Heart right ventricle (tissue), 16 donors: ENCODE measurements at regions of chr12 and their contacts with region 1.

Region 1: GRCh38 chr12:109428037-109428629 is 49.0 kb downstream of the KCTD10 start:
- DNase-seq: peak; percentile 79 to 87
- ATAC-seq: peak; percentile 75 to 93 (median 88)
- H3K4me3 ChIP-seq: no peak overlapping the region
- H3K27ac ChIP-seq: no peak overlapping the region
- H3K4me1 ChIP-seq: peaks cover 0 to 9% (median 7%) of the 10 kb centered on the region in 9 donors
- H3K27me3 ChIP-seq: peaks cover 0 to 2% (median 0%) of the 10 kb centered on the region in 7 donors
- CTCF ChIP-seq: peak; percentile 98 to 100 (median 98)

Region 2: GRCh38 chr12:109239179-109239578 is 189.0 kb before region 1 on chr12:
- intact Hi-C with region 1: no loop called
- DNase-seq: no peak
- ATAC-seq: no peak
- H3K4me3 ChIP-seq: no peak overlapping the region
- H3K27ac ChIP-seq: no peak overlapping the region
- H3K4me1 ChIP-seq: no peaks in the 10 kb centered on the region
- H3K27me3 ChIP-seq: no peaks in the 10 kb centered on the region
- CTCF ChIP-seq: no peak

Region 3: DNA sequence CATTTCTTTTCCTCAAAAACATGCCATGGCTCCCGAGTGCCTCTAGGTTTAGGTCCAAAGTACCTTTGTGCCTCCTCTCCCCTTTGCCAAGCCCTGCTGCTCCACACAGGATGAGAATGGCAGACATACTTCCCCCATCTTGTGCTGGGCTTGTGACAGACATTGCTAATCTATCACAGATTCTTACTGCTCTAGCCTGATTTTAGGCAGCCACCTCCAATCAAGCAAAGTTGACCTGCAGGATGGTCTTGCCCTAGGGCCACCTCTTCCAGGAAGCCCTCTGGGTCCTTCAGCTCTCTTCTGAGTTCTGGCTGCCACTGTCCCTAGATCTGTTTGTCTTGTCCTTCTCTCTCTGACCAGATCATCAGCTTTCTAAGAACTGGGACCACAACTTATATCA is 139.6 kb before region 1 on chr12:
- intact Hi-C with region 1: no loop called
- DNase-seq: no peak
- ATAC-seq: no peak
- H3K4me3 ChIP-seq: no peak overlapping the region
- H3K27ac ChIP-seq: no peak overlapping the region
- H3K4me1 ChIP-seq: peaks cover 0 to 14% (median 3%) of the 10 kb centered on the region in 9 donors
- H3K27me3 ChIP-seq: peaks cover 0 to 17% (median 8%) of the 10 kb centered on the region in 7 donors
- CTCF ChIP-seq: no peak

Region 4: DNA sequence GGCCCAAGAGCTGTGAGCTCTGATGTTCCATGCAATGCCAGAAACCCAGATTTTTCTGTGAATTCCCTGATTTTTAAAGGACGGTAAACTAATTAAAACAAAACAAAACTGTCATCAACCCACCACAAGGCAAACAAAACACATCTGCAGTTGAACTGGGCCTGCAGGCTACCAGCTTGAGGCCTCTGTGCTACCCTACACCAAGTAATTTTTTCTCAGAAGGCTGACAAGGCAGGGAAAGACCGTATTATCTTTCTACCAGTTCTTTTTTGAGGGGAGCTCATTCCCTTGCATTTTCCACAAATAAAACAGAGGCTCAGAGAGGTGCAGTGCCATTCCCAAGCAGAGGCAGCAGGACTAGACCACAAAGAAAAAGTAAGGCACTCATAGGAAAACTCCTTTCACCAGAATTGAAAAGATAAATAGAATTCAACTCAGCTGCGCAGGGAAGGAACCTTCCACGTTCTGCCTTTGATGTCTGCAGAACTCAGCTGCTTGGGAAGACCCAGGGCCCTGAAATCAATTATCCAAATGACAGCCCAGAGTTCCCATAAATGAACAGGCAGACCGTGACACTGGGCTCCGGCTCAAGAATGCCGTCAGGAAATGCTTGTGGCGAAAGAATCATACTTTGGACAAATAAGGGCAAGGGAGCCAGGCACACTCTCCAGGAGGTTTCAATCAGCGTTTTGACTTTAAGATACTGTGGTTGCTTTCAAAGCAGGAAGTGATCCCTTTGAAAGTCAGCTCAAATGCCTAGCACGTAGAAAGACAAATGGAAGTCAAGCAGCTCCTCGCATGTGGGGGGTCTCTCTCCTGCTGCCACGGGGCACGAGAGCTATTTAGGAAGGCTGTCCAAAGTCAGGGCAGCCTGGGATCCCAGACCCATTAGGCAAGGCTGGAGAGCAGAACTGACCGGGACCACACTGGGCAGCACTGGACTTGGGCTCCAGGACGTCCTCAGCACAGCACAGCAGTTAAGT is 34.9 kb after region 1 on chr12:
- intact Hi-C with region 1: loop called in 1 of 10 experiments (anchors 5 kb)
- DNase-seq: peak; percentile 71 to 88
- ATAC-seq: peak; percentile 70 to 86 (median 82)
- H3K4me3 ChIP-seq: peak overlapping the region in 7 of 10 donors; percentile 10 to 31 (median 18)
- H3K27ac ChIP-seq: peak overlapping the region; percentile 87 to 99 (median 98)
- H3K4me1 ChIP-seq: peaks cover 43 to 100% (median 100%) of the 10 kb centered on the region in 9 donors
- H3K27me3 ChIP-seq: no peaks in the 10 kb centered on the region
- CTCF ChIP-seq: no peak

Region 5: DNA sequence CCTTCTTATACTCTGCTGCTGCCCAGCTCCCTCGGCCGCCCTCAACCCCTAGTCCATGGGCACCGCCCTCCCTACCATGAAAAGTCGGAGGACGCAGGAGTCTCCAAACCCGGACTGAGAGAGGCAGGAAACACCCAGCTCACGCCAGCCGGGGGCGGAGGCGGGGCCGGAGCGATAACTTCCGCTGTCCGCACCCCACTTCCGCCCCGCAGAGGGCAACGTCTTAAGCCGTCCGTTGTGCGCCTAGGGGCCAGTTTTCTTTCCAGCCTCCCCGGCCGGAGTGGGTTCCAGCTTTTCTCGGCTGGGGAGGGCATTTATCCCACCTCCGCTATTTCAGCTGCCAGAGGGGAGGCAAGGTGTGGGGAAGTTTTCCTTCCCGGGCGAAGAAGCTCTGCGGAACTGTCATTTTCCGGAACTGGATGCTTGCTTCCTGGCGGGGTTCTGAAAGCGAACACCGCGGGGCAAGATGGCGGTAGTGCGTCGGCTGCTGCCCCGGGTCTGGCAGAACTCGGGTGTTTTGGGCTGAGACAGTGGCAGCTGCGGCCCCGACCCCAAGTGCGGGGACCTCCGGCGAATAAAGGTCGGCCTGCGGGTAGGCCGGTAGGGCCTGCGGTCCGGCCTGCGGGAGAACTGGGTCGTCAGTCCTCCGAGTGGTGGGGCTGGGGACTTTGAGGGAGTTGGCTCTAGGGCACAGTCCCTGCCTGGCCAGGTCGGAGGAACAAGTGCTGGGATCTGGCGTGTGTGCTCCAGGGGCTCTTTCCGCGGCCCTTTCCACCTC is 49.2 kb after region 1 on chr12 and contains the starts of genes KCTD10 and UBE3B:
- intact Hi-C with region 1: loop called in 9 of 10 experiments (anchors 2 to 5 kb)
- DNase-seq: peak; percentile 89 to 91
- ATAC-seq: peak; percentile 97 to 100 (median 99)
- H3K4me3 ChIP-seq: peak within 1 kb of the TSS; percentile 73 to 99 (median 88)
- H3K27ac ChIP-seq: peak within 1 kb of the TSS; percentile 92 to 100 (median 98)
- H3K4me1 ChIP-seq: peaks cover 8 to 63% (median 56%) of the 10 kb centered on the region in 9 donors
- H3K27me3 ChIP-seq: no peaks in the 10 kb centered on the region
- CTCF ChIP-seq: peak in 4 of 9 donors; percentile 14 to 37 (median 18)
- total RNA-seq, gene KCTD10: 21.5 to 64.9 (median 33.8) TPM
- total RNA-seq, gene UBE3B: 50.9 to 58.8 (median 55.8) TPM

Region 6: GRCh38 chr12:109597795-109598427 is 169.8 kb after region 1 on chr12:
- intact Hi-C with region 1: loop called in 5 of 10 experiments (anchors 10 kb)
- DNase-seq: peak; percentile 86 to 90
- ATAC-seq: peak; percentile 75 to 93 (median 91)
- H3K4me3 ChIP-seq: no peak overlapping the region
- H3K27ac ChIP-seq: no peak overlapping the region
- H3K4me1 ChIP-seq: peaks cover 0 to 26% (median 12%) of the 10 kb centered on the region in 9 donors
- H3K27me3 ChIP-seq: no peaks in the 10 kb centered on the region
- CTCF ChIP-seq: peak; percentile 90 to 99 (median 97)

Region 7: DNA sequence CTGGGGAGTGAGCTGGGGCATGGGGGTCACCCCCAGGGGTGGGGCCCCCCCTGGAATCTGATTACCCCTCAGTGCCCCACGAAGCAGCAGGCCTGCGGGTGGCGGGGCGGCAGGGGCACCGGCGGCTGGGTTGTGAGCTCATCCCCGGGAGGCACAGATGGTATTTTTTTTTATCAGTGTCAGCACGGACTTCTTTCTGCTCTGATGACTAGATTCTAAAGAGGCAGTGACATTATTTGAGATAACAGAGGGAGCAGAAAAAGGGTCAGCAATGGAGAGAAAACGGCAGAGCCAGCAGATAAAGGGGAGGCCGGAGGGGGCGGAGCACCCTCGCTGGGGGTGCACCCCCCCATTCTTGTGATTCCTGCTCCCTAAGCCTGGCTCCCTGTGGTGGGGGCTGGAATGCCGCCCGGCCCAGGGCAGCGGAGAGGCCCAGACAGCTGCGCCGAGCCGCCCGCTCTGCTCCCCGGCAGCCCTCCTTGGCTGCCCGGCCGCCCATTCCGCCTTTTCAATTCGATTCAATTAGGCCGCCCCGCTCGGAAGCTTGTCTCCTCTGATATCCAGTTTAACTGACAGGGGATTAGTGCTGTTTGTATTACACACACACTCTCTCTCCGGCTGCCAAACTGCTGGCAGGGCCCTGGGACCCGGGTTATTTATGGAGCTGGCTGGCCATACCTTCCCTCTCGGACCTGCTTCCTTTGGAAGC is 178.3 kb after region 1 on chr12:
- intact Hi-C with region 1: loop called in 1 of 10 experiments (anchors 10 kb)
- DNase-seq: peak; percentile 41 to 44
- ATAC-seq: peak; percentile 56 to 92 (median 77)
- H3K4me3 ChIP-seq: peak overlapping the region in 6 of 10 donors; percentile 8 to 38 (median 28)
- H3K27ac ChIP-seq: peak overlapping the region in 7 of 10 donors; percentile 20 to 80 (median 63)
- H3K4me1 ChIP-seq: peaks cover 0 to 18% (median 10%) of the 10 kb centered on the region in 9 donors
- H3K27me3 ChIP-seq: peaks cover 0 to 22% (median 11%) of the 10 kb centered on the region in 7 donors
- CTCF ChIP-seq: no peak

Region 8: GRCh38 chr12:109775172-109775881 is 347.2 kb after region 1 on chr12:
- intact Hi-C with region 1: loop called in 9 of 10 experiments (anchors 2 to 10 kb)
- DNase-seq: peak; percentile 73 to 79
- ATAC-seq: peak; percentile 76 to 92 (median 85)
- H3K4me3 ChIP-seq: no peak overlapping the region
- H3K27ac ChIP-seq: no peak overlapping the region
- H3K4me1 ChIP-seq: peaks cover 0 to 12% (median 6%) of the 10 kb centered on the region in 9 donors
- H3K27me3 ChIP-seq: no peaks in the 10 kb centered on the region
- CTCF ChIP-seq: peak; percentile 78 to 94 (median 87)

Region 9: GRCh38 chr12:109868182-109868935 is 440.2 kb after region 1 on chr12:
- intact Hi-C with region 1: no loop called
- DNase-seq: no peak
- ATAC-seq: no peak
- H3K4me3 ChIP-seq: no peak overlapping the region
- H3K27ac ChIP-seq: no peak overlapping the region
- H3K4me1 ChIP-seq: peaks cover 0 to 52% (median 23%) of the 10 kb centered on the region in 9 donors
- H3K27me3 ChIP-seq: no peaks in the 10 kb centered on the region
- CTCF ChIP-seq: no peak

Region 10: DNA sequence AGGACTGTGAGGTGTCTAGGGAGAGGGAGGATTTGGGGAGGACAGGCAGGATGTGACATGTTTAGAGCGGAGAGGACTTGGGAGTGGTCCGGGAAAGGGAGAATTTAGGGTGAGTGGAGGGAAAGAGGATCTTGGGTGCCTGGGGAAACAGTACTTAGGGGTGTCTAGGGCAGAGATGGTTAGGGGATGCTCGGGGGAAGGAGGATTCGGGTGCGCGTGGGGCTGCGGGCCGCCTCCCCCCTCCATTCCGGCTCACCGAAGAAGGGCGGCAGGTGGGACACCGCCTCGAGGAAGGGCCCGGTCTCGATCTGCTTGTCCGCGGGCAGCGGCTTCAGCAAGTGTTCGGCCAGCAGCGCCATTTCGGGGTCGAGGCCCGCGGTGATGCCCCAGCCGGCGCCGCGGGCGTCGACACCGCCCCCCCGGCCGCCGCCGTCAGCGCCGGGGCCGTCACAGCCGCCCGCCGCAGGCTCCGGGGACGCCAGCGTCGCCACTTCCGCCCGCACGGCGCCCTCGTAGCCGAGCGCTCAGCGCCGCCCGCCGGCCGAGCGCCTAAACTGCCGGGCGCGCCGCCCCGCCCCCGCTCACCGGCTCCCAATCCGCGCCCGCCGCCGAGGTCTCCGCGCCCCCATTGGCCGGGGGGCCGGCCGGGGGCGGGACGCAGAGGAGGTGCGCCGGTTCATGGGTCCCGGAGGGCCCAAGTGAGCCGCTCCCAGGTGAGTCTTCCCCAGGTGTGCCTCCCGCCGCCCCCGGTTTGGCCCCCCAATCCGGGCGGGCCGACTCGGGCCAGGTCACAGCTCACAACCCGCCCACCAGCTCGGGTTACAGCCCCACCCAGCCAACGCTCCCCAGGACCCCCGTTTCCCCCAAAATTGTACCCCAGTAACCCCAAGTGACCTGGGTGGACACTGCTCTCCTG is 452.1 kb after region 1 on chr12 and contains the start of gene GLTP:
- intact Hi-C with region 1: loop called in 1 of 10 experiments (anchors 5 kb)
- DNase-seq: peak; percentile 81 to 89
- ATAC-seq: peak; percentile 95 to 99 (median 96)
- H3K4me3 ChIP-seq: peak within 1 kb of the TSS; percentile 60 to 99 (median 88)
- H3K27ac ChIP-seq: peak within 1 kb of the TSS in 9 of 10 donors; percentile 46 to 95 (median 87)
- H3K4me1 ChIP-seq: peaks cover 11 to 32% (median 30%) of the 10 kb centered on the region in 9 donors
- H3K27me3 ChIP-seq: no peaks in the 10 kb centered on the region
- CTCF ChIP-seq: peak; percentile 26 to 87 (median 56)
- total RNA-seq, gene GLTP: 18.0 to 28.0 (median 22.0) TPM